Activated CD4-positive, alpha-beta T cell treated with anti-CD3 and anti-CD28 coated beads, Interleukin-2, amount 10 ng/mL, durations not matched to agents 7 days and 5 days (primary cell): ENCODE measurements at regions of chr14 and their contacts with region 1.

Region 1: DNA sequence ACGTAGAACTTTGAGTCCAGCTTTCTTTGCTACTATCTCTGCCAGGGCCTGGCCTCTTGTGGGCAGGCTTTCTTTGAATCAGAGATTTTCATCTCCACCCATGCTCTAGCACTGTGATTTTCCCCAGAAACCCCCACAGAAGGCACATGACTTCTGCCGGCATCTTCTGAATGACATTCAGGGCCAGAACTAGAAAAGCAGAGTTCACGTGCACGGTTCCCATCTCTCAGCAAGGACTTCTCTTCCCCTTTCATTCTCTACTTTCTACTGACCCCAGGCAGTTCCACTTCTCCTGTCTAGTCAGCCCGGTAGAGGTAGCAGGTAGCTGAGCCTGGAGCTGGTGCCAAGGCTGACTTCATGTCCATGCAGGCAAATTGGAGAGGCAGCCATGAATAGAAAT is 26.9 kb downstream of the BATF start:
- DNase-seq: no peak
- H3K4me3 Mint-ChIP-seq: no peak overlapping the region
- H3K27ac Mint-ChIP-seq: no peak overlapping the region
- H3K4me1 Mint-ChIP-seq: peaks cover 30% of the 10 kb centered on the region
- H3K27me3 Mint-ChIP-seq: no peaks in the 10 kb centered on the region

Region 2: DNA sequence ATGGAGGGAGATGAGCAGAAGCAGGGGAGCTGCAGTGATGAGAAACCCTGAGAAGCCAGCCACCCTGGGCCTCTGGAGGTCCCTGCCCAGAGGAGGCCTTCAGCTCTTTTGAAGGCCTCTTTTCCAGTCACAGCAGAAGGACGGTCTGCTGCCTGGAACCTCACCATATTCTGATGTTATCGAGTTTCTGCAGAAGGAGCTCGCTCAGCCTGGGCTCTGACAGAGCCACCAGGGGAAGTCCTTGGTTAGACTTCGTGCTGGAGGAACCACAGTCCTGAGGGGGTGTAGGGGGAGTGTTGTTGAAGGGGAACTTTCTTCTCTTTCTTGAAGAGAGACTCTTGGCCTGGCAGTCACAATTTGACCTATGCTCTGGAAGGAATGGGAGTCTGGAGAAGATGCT is 52.0 kb before region 1 on chr14:
- CTCF ChIA-PET with region 1: no interaction called
- POLR2A ChIA-PET with region 1: no interaction called
- DNase-seq: no peak
- H3K4me3 Mint-ChIP-seq: no peak overlapping the region
- H3K27ac Mint-ChIP-seq: peak overlapping the region; percentile 76
- H3K4me1 Mint-ChIP-seq: peaks cover 44% of the 10 kb centered on the region
- H3K27me3 Mint-ChIP-seq: no peaks in the 10 kb centered on the region

Region 3: GRCh38 chr14:75560962-75561432 is 11.8 kb after region 1 on chr14:
- CTCF ChIA-PET with region 1: interaction called, 13 read pairs
- POLR2A ChIA-PET with region 1: interaction called, 4 read pairs
- DNase-seq: peak; percentile 45
- H3K4me3 Mint-ChIP-seq: peak overlapping the region; percentile 2
- H3K27ac Mint-ChIP-seq: no peak overlapping the region
- H3K4me1 Mint-ChIP-seq: peaks cover 62% of the 10 kb centered on the region
- H3K27me3 Mint-ChIP-seq: no peaks in the 10 kb centered on the region